Mucosa of descending colon (tissue), 3 donors: ENCODE measurements at regions of chr7 and their contacts with region 1.

Region 1: GRCh38 chr7:21514062-21514461 is 28.8 kb upstream of the DNAH11 start:
- DNase-seq: no peak
- ATAC-seq: no peak
- H3K4me3 ChIP-seq: no peak overlapping the region
- H3K4me1 ChIP-seq: no peaks in the 10 kb centered on the region
- CTCF ChIP-seq: no peak

Region 2: GRCh38 chr7:21011118-21011517 is 502.9 kb before region 1 on chr7:
- intact Hi-C with region 1: loop called in 1 of 2 experiments (anchors 10 kb)
- DNase-seq: no peak
- ATAC-seq: peak; percentile 36
- H3K4me3 ChIP-seq: no peak overlapping the region
- H3K4me1 ChIP-seq: no peaks in the 10 kb centered on the region
- CTCF ChIP-seq: no peak

Region 3: DNA sequence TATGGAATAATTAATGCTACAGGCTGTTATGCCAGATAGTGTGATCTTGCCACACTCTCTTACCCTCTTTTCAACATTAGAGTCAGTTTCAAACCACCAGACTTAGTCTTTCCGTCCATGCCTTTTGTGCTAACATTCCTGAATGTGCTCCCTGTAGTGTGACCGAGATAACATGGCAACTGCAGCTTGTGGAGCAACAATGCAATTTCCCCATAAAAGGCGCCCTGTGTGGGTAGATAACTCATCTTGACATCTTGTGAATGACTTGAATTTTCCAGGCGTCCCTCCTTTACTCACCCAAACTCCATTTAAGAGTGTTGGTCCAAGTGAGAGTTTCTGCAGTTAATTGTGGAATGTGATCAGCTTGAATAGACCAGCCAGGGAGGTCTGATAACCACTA is 128.4 kb after region 1 on chr7:
- intact Hi-C with region 1: no loop called
- DNase-seq: no peak
- ATAC-seq: no peak
- H3K4me3 ChIP-seq: no peak overlapping the region
- H3K4me1 ChIP-seq: no peaks in the 10 kb centered on the region
- CTCF ChIP-seq: no peak